PC-9 (cell line): ENCODE measurements at regions of chr2 and their contacts with region 1.

Region 1: DNA sequence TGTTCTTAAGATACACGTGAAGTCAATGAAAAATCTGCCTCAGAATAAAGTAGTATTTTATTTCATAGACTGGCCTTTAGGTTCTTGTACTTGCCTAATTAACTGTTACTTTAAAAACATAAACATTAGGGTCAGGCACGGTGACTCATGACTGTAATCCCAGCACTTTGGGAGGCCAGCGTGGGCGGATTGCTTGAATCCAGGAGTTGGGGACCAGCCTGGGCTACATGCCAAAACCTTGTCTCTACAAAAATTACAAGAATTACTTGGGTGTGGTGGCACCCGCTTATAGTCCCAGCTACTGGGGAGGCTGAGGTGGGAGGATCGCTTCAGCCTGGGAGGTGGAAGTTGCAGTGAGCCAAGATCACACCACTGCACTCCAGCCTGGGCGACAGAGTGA is 16.0 kb upstream of the SNORC start:
- DNase-seq: peak; percentile 89 to 92
- H3K4me3 ChIP-seq: no peak overlapping the region
- H3K27ac ChIP-seq: peak overlapping the region; percentile 97
- H3K4me1 ChIP-seq: peaks cover 53% of the 10 kb centered on the region
- H3K27me3 ChIP-seq: no peaks in the 10 kb centered on the region
- CTCF ChIP-seq: no peak

Region 2: DNA sequence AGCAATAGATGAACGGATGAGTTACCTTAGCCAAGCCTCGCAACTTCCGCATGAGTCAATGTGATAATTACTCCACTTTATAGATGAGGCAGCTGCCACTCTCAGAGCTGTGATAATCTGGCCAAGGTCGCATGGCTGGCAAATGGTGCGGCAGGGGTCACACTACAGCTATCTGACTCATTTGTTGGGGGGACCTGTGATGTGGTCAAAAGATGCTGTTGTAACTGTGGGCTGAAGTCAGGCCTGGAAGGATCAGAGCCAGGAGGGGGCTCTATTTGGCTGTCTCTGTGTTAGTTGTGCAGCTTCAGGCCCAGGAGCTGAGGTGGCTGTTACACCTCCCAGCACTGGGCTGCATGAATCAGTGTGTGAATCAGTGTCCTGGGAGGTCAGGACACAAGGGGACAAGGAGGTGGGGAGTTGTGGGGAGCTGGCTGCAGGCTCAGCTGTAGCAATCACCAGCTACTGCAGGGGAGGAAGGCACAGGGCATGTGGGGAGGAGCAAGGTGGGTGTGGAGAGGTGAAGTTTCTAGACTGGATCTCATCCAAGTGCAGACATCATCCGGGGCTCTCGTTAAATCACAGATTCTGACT is 125.9 kb after region 1 on chr2:
- CTCF ChIA-PET with region 1: interaction called, 7 read pairs
- POLR2A ChIA-PET with region 1: interaction called, 3 read pairs
- intact Hi-C with region 1: loop called (anchors 1 kb)
- DNase-seq: peak; percentile 91 to 99
- H3K4me3 ChIP-seq: peak overlapping the region; percentile 33; the same call in 1 of the 2 replicates
- H3K27ac ChIP-seq: peak overlapping the region; percentile 95
- H3K4me1 ChIP-seq: peaks cover 51% of the 10 kb centered on the region
- H3K27me3 ChIP-seq: no peaks in the 10 kb centered on the region
- CTCF ChIP-seq: peak; percentile 44; the same call in 1 of the 2 replicates

Region 3: GRCh38 chr2:233026192-233026813 is 172.2 kb after region 1 on chr2:
- CTCF ChIA-PET with region 1: no interaction called
- POLR2A ChIA-PET with region 1: interaction called, 5 read pairs
- intact Hi-C with region 1: loop called (anchors 1 kb)
- DNase-seq: peak; percentile 69 to 97
- H3K4me3 ChIP-seq: no peak overlapping the region
- H3K27ac ChIP-seq: peak overlapping the region; percentile 72
- H3K4me1 ChIP-seq: peaks cover 45% of the 10 kb centered on the region
- H3K27me3 ChIP-seq: no peaks in the 10 kb centered on the region
- CTCF ChIP-seq: peak; percentile 51

Region 4: DNA sequence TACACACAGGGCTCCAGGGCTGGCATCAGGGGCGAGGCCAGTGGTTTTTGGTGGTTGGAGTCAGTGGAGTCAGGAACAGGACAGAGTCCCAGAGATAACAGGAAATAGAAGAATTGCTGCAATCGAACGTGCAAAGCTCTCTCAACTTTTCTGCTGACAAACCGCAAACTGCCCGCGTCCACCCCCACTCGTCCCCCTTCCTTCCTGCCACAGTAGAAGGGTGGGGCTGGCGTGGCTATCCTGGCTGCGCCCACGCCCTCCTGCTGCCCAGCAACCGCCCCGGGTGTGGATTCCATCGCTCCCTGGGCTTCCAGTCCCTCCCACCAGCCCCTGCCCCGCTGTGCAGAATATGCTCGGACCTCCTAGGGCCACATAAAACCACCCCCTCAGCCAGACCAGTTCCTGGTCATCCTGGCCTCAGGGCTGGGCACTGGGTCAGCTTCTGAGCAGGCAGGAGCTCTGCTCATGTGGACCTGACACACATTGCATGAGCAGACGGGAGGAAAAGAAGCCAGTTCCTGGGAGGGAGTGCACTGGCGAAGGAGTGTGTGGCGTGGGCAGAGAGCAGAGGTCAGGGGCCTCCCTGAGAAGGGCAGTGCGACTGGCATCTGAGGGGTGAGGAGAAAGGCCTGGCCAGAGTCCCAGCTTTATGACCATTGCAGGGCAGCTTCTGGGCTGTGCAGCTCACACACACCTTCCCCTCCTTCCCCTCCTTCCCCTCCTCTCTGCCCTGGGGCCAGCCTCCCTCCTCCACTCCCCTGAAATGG is 312.0 kb after region 1 on chr2:
- CTCF ChIA-PET with region 1: no interaction called
- POLR2A ChIA-PET with region 1: no interaction called
- intact Hi-C with region 1: loop called (anchors 1 kb)
- DNase-seq: peak; percentile 97 to 99
- H3K4me3 ChIP-seq: no peak overlapping the region
- H3K27ac ChIP-seq: peak overlapping the region; percentile 76
- H3K4me1 ChIP-seq: peaks cover 53% of the 10 kb centered on the region
- H3K27me3 ChIP-seq: no peaks in the 10 kb centered on the region
- CTCF ChIP-seq: no peak

Region 5: DNA sequence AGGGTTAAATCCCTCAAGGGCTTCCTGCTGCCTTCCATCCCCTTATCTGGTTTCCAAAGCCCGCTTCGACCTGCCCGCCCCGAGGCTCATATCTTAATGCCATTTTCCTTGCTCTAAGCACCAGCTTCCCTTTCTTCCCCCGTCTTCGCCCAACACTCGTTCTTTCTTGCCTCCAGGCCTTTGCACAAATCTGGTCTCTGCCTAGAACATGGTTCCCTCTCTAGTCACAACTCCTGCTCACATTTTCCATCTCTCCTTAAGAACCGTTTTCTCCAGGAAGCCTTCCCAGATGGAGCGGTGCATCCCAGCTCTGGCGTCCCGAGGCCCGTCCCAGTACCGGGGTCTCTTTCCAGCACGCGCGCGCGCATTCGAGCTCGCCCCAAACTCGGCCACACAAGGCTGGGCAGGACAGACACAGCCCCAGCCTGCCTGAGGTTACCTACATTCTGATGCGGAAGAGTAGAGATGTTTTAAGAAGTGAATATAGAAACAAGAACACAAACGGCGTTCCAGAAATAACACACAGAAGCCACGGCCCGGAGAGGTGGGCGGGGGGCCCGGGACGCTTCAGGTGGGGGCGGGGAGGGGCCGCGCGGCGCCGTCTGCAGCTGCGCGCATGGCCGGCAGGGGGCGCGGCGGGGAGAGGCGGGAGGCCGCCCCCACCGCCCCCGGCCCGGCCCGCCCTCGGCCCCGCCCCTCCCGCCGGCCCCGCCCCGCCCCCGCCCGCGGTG is 499.9 kb after region 1 on chr2 and contains the start of gene DGKD:
- CTCF ChIA-PET with region 1: no interaction called
- POLR2A ChIA-PET with region 1: no interaction called
- intact Hi-C with region 1: loop called (anchors 10 kb)
- DNase-seq: peak; percentile 78 to 79
- H3K4me3 ChIP-seq: peak within 1 kb of the TSS; percentile 67
- H3K27ac ChIP-seq: peak within 1 kb of the TSS; percentile 65
- H3K4me1 ChIP-seq: peaks cover 79% of the 10 kb centered on the region
- H3K27me3 ChIP-seq: no peaks in the 10 kb centered on the region
- CTCF ChIP-seq: peak; percentile 76
- total RNA-seq, gene DGKD: 43.1 and 59.5 TPM in 2 replicates

Region 6: GRCh38 chr2:233705911-233706506 is 851.9 kb after region 1 on chr2:
- CTCF ChIA-PET with region 1: no interaction called
- POLR2A ChIA-PET with region 1: no interaction called
- intact Hi-C with region 1: loop called (anchors 2 kb)
- DNase-seq: peak; percentile 97
- H3K4me3 ChIP-seq: peak overlapping the region; percentile 15; the same call in 1 of the 2 replicates
- H3K27ac ChIP-seq: peak overlapping the region; percentile 95
- H3K4me1 ChIP-seq: peaks cover 97% of the 10 kb centered on the region
- H3K27me3 ChIP-seq: no peaks in the 10 kb centered on the region
- CTCF ChIP-seq: no peak